Activated B cell treated with CpG ODN at 0.5 μM for 24 hours (primary cell): ENCODE measurements at regions of chr3 and their contacts with region 1.

Region 1: DNA sequence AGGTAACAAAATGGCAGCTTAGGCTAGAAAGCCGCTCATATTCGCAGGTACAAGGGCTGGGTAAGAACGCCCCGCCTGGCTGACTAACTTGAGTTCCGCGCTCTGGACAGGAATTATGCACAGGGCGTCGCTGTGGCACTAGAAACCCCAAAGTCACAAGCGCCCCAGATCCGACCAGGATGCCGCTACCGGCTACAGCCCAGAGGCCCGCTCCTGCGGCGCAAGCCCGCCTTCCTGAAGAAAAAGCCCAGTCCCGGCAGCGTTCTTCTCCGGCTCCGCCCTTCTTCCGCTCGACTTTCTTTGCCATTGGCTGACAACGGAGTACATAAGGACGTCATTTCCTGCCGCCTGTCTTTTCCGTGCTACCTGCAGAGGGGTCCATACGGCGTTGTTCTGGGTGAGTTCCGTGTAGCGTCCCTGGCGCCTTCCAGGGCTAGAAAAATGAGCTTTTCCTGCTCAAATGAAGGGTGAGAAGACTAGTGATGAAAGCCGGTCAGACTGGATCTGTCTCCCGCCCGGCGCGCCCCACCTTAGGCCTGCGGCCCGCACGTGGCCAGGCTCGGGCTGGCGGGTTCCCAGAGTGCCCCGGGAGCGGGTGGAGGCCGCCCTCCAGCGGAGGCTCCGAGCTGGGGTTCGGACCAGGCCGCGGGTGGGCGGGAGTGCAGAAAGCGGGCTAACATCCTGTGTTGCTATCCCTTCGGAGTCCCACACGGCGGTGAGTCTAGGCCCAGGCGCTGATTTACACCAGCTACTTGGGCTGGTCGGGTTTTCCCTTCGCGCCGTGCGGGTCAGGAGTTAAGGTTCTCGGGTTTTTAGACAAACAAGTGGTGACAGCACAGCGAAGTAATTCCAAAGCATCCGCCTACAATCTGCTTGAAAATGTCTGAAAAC is at the start of gene RPSA:
- DNase-seq: peak; percentile 80
- ATAC-seq: peak; percentile 90
- H3K4me3 Mint-ChIP-seq: peak within 1 kb of the TSS; percentile 94
- H3K27ac Mint-ChIP-seq: peak within 1 kb of the TSS; percentile 96
- H3K4me1 Mint-ChIP-seq: peaks cover 48% of the 10 kb centered on the region
- H3K27me3 Mint-ChIP-seq: no peaks in the 10 kb centered on the region
- CTCF ChIP-seq: no peak
- total RNA-seq, gene RPSA: 2,697 and 2,952 TPM in 2 replicates

Region 2: DNA sequence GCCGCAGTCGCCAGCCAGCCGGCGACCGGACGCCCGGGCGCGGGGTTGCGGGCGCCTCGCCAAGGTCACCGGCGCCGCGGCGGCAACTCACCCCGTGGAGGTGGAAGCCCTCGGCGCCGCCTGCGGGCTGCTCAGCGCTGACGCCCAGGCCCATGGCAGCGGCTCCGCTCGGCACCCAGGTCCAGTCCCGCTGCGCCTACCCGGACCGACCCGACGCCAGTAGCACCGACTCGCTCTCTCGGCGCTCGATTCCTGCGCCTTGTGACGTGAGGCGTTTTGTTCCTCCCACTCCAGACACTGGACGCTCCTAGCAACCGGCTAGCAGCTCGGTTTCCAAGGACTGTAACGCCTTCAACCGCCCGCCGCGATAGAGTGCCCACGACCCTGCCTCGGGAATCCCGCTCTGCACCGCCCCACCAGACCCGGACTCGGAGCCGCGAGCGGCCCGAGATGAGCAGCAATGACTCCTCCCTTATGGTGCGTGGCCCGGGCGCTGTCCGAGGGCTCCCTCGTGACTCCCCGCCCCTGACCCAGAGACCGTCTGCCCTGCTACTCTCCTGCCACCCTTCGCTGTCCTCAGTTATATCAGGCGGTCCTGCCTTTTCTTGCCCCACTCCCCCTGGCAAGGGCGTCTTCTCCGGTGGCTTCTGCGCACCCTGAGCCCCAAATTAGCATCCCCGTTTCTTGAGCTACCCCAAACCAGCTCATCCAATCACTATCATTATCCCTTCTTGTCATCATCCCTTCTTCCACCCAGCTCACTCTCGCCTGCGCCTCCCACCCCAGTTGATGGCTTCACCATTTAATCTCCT is 299.0 kb before region 1 on chr3 and contains the starts of genes GORASP1 and TTC21A:
- CTCF ChIA-PET with region 1: no interaction called
- POLR2A ChIA-PET with region 1: interaction called, 5 read pairs
- intact Hi-C with region 1: loop called (anchors 2 kb)
- DNase-seq: peak; percentile 64
- ATAC-seq: peak; percentile 50
- H3K4me3 Mint-ChIP-seq: peak within 1 kb of the TSS; percentile 98
- H3K27ac Mint-ChIP-seq: peak within 1 kb of the TSS; percentile 91
- H3K4me1 Mint-ChIP-seq: peaks cover 62% of the 10 kb centered on the region
- H3K27me3 Mint-ChIP-seq: no peaks in the 10 kb centered on the region
- CTCF ChIP-seq: no peak
- total RNA-seq, gene GORASP1: 41.6 and 47.8 TPM in 2 replicates
- total RNA-seq, gene TTC21A: 11.4 and 15.9 TPM in 2 replicates

Region 3: DNA sequence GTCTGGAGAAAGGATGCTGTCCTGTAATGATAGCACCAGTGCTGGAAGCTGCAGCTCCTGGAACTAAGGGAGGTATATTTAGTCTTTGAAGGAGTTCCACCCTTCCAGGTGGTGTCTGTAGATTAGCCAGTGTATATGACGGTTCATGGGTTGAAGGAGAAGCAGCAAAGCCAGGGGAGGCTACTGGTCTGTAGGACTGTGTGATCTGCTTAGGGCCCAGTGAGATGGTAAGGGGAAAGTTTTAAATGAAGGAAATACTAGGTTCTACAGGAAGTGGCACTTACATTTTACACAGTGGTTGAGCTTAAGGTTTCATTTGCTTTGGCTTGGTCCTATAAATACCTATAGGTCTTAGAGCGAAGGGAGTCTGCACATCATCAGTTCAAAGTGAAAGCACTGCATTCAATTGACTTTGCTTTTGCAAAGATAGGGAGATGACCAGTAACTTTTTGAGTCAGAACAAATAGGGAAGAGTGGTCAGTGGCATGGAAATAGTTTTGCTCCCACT is 17.8 kb before region 1 on chr3:
- CTCF ChIA-PET with region 1: interaction called, 16 read pairs
- POLR2A ChIA-PET with region 1: interaction called, 101 read pairs
- intact Hi-C with region 1: loop called (anchors 1 kb)
- DNase-seq: no peak
- ATAC-seq: peak; percentile 64
- H3K4me3 Mint-ChIP-seq: peak overlapping the region; percentile 71
- H3K27ac Mint-ChIP-seq: peak overlapping the region; percentile 91
- H3K4me1 Mint-ChIP-seq: peaks cover 68% of the 10 kb centered on the region
- H3K27me3 Mint-ChIP-seq: no peaks in the 10 kb centered on the region
- CTCF ChIP-seq: no peak